Heart left ventricle (tissue), 16 donors: ENCODE measurements at regions of chr17 and their contacts with region 1.

Region 1: DNA sequence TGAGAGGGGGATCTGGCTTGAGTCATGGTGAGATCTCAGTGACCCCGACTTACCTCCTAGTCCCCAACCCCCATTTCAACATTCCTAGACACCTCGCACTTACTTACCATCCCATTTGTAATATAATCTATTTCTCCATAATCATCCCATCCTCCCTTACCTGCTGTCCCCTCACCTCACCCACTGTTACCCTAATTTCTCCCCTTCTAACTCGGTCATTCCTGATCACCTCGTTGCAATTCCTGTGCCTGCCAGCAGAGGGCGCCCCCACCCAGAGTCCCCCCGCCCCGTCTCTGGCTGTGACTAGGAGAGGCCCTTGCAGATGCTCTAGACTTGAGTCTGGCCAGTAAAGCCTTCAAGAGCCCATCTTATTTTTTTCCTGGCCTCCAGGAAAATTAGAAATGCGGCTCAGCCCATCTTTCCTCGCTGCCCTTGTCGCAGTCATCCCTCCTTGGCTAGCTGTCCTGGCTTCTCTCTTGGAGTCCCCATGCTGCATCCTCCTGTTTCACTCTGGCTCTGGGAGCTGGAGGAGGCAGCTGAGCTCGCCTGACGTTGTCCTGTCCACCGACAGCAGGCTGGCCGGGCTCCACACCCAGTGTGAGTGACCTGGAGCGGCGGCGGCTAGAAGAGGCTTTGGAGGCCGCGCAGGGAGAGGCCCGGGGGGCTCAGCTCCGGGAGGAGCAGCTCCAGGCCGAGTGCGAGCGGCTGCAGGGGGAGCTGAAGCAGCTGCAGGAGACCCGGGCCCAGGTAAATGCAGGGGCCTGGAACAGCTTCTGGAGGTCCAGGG is 5.0 kb downstream of the TBKBP1 start:
- DNase-seq: peak in 3 of 5 donors; percentile 45 to 88 (median 52)
- ATAC-seq: no peak
- H3K4me3 ChIP-seq: no peak overlapping the region
- H3K27ac ChIP-seq: peak overlapping the region in 1 of 12 donors; percentile 13
- H3K4me1 ChIP-seq: peaks cover 0 to 47% (median 14%) of the 10 kb centered on the region in 12 donors
- H3K27me3 ChIP-seq: no peaks in the 10 kb centered on the region
- CTCF ChIP-seq: peak; percentile 89 to 98 (median 96)
- POLR2A ChIP-seq: no peak

Region 2: GRCh38 chr17:47650525-47651522 is 48.1 kb before region 1 on chr17:
- intact Hi-C with region 1: loop called in 1 of 10 experiments (anchors 5 kb)
- DNase-seq: peak; percentile 96 to 98 (median 98)
- ATAC-seq: peak; percentile 69 to 83 (median 78)
- H3K4me3 ChIP-seq: peak overlapping the region; percentile 67 to 97 (median 86)
- H3K27ac ChIP-seq: peak overlapping the region in 11 of 12 donors; percentile 91 to 98 (median 93)
- H3K4me1 ChIP-seq: peaks cover 0 to 75% (median 41%) of the 10 kb centered on the region in 12 donors
- H3K27me3 ChIP-seq: no peaks in the 10 kb centered on the region
- CTCF ChIP-seq: no peak
- POLR2A ChIP-seq: no peak

Region 3: GRCh38 chr17:47663912-47664625 is 34.9 kb before region 1 on chr17:
- intact Hi-C with region 1: loop called in 2 of 10 experiments (anchors 5 kb)
- DNase-seq: peak in 4 of 5 donors; percentile 27 to 48 (median 40)
- ATAC-seq: peak in 3 of 4 donors; percentile 61 to 70 (median 69)
- H3K4me3 ChIP-seq: no peak overlapping the region
- H3K27ac ChIP-seq: no peak overlapping the region
- H3K4me1 ChIP-seq: peaks cover 0 to 35% (median 0%) of the 10 kb centered on the region in 12 donors
- H3K27me3 ChIP-seq: no peaks in the 10 kb centered on the region
- CTCF ChIP-seq: peak; percentile 61 to 83 (median 74)
- POLR2A ChIP-seq: no peak

Region 4: GRCh38 chr17:47751471-47751870 is 52.5 kb after region 1 on chr17:
- intact Hi-C with region 1: no loop called
- DNase-seq: no peak
- ATAC-seq: no peak
- H3K4me3 ChIP-seq: no peak overlapping the region
- H3K27ac ChIP-seq: no peak overlapping the region
- H3K4me1 ChIP-seq: no peaks in the 10 kb centered on the region
- H3K27me3 ChIP-seq: peaks cover 0 to 57% (median 6%) of the 10 kb centered on the region in 9 donors
- CTCF ChIP-seq: no peak
- POLR2A ChIP-seq: no peak

Region 5: GRCh38 chr17:47789611-47790561 is 90.9 kb after region 1 on chr17:
- intact Hi-C with region 1: loop called in 5 of 10 experiments (anchors 5 to 10 kb)
- DNase-seq: peak in 4 of 5 donors; percentile 35 to 79 (median 61)
- ATAC-seq: peak; percentile 42 to 95 (median 89)
- H3K4me3 ChIP-seq: peak overlapping the region in 11 of 12 donors; percentile 32 to 51 (median 42)
- H3K27ac ChIP-seq: no peak overlapping the region
- H3K4me1 ChIP-seq: peaks cover 0 to 10% (median 5%) of the 10 kb centered on the region in 12 donors
- H3K27me3 ChIP-seq: peaks cover 17 to 95% (median 65%) of the 10 kb centered on the region in 9 donors
- CTCF ChIP-seq: peak; percentile 30 to 66 (median 48)
- POLR2A ChIP-seq: no peak

Region 6: GRCh38 chr17:47802341-47803022 is 103.5 kb after region 1 on chr17:
- intact Hi-C with region 1: loop called in 5 of 10 experiments (anchors 2 to 10 kb)
- DNase-seq: no peak
- ATAC-seq: peak; percentile 55 to 60 (median 58)
- H3K4me3 ChIP-seq: no peak overlapping the region
- H3K27ac ChIP-seq: no peak overlapping the region
- H3K4me1 ChIP-seq: peaks cover 0 to 10% (median 0%) of the 10 kb centered on the region in 12 donors
- H3K27me3 ChIP-seq: peaks cover 0 to 6% (median 0%) of the 10 kb centered on the region in 9 donors
- CTCF ChIP-seq: peak; percentile 27 to 60 (median 50)
- POLR2A ChIP-seq: no peak

Region 7: GRCh38 chr17:47889734-47890529 is 191.0 kb after region 1 on chr17:
- intact Hi-C with region 1: loop called in 2 of 10 experiments (anchors 5 to 10 kb)
- DNase-seq: peak; percentile 84 to 92 (median 87)
- ATAC-seq: peak; percentile 74 to 93 (median 92)
- H3K4me3 ChIP-seq: no peak overlapping the region
- H3K27ac ChIP-seq: no peak overlapping the region
- H3K4me1 ChIP-seq: peaks cover 0 to 16% (median 8%) of the 10 kb centered on the region in 12 donors
- H3K27me3 ChIP-seq: no peaks in the 10 kb centered on the region
- CTCF ChIP-seq: peak; percentile 89 to 99 (median 96)
- POLR2A ChIP-seq: no peak

Region 8: GRCh38 chr17:47895856-47896671 is 197.1 kb after region 1 on chr17 and contains the start of gene SP2:
- intact Hi-C with region 1: loop called in 2 of 10 experiments (anchors 5 to 10 kb)
- DNase-seq: peak; percentile 99 to 100 (median 99)
- ATAC-seq: peak; percentile 95 to 97 (median 96)
- H3K4me3 ChIP-seq: peak within 1 kb of the TSS; percentile 72 to 94 (median 79)
- H3K27ac ChIP-seq: peak within 1 kb of the TSS; percentile 98 to 100 (median 99)
- H3K4me1 ChIP-seq: peaks cover 0 to 58% (median 48%) of the 10 kb centered on the region in 12 donors
- H3K27me3 ChIP-seq: no peaks in the 10 kb centered on the region
- CTCF ChIP-seq: peak in 7 of 12 donors; percentile 3 to 53 (median 30)
- POLR2A ChIP-seq: peak; percentile 73 to 90
- total RNA-seq, gene SP2: 11.1 to 21.2 (median 16.7) TPM